GM10248 (cell line): ENCODE measurements at regions of chr18 and their contacts with region 1.

Region 1: GRCh38 chr18:65768379-65768778 is 17.6 kb downstream of the CDH7 start:
- DNase-seq: no peak
- CTCF ChIP-seq: no peak

Region 2: GRCh38 chr18:65788373-65788772 is 20.0 kb after region 1 on chr18:
- CTCF ChIA-PET with region 1: interaction called, 14 read pairs
- POLR2A ChIA-PET with region 1: no interaction called
- DNase-seq: no peak
- CTCF ChIP-seq: no peak

Region 3: GRCh38 chr18:65852273-65852672 is 83.9 kb after region 1 on chr18:
- CTCF ChIA-PET with region 1: no interaction called
- POLR2A ChIA-PET with region 1: no interaction called
- DNase-seq: no peak
- CTCF ChIP-seq: no peak